Activated CD4-positive, alpha-beta T cell treated with anti-CD3 and anti-CD28 coated beads, Interleukin-2, amount 10 ng/mL, durations not matched to agents 24 days and 14 days (primary cell): ENCODE measurements at regions of chrX and their contacts with region 1.

Region 1: DNA sequence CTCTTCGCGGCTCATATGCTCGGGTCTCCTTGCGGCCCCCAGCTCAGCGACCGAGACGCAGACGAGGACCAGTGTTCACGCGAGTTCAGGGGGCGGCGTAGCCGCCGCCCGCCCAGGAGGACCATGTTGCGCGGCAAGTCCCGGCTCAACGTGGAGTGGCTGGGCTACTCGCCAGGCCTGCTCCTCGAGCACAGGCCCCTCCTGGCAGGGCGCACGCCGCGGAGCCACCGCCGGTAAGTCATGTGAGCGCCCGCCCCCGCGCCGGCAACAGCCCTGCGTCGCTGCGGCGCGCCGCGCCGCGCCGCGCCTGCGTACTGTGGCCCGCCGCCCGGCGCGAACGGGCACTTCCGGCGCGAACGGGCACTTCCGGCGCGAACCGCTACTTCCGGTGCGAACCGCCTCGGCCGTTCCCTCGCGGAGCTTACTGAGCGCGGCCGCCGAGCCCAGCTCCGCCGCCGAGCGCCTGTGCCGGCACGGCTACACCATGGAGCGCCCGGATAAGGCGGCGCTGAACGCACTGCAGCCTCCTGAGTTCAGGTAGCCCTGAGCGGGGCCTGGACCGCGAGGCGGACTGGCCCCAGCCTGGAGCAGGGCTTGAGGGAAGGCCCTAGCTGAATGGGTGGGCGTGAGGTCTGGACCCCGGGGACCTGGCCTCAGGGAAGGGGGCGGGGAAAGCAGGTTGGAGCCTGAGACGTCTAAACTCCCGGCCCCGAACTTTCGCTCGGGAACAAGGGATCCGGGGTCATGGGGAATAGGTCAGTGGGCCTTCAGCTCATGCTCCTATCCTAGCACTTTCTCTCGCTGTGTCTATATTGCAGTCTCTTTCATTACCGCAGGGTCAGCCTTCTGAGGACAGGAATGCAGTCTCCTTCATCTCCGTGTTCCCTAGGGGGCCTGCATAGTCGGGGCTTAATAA is at the start of gene VMA21:
- DNase-seq: peak; percentile 94
- H3K4me3 Mint-ChIP-seq: peak within 1 kb of the TSS; percentile 93
- H3K27ac Mint-ChIP-seq: peak within 1 kb of the TSS; percentile 94
- H3K4me1 Mint-ChIP-seq: peaks cover 40% of the 10 kb centered on the region
- H3K27me3 Mint-ChIP-seq: no peaks in the 10 kb centered on the region
- total RNA-seq, gene VMA21: 47.4 and 51.7 TPM in 2 replicates

Region 2: GRCh38 chrX:149504915-149505651 is 1892.0 kb before region 1 on chrX and contains the start of gene IDS:
- intact Hi-C with region 1: loop called (anchors 10 kb)
- DNase-seq: peak; percentile 97
- H3K4me3 Mint-ChIP-seq: peak within 1 kb of the TSS; percentile 88
- H3K27ac Mint-ChIP-seq: peak within 1 kb of the TSS; percentile 96
- H3K4me1 Mint-ChIP-seq: peaks cover 31% of the 10 kb centered on the region
- H3K27me3 Mint-ChIP-seq: no peaks in the 10 kb centered on the region
- total RNA-seq, gene IDS: 43.9 and 44.9 TPM in 2 replicates

Region 3: GRCh38 chrX:150568320-150569154 is 828.5 kb before region 1 on chrX and contains the start of gene MTM1:
- intact Hi-C with region 1: loop called (anchors 10 kb)
- DNase-seq: peak; percentile 97
- H3K4me3 Mint-ChIP-seq: peak within 1 kb of the TSS; percentile 86
- H3K27ac Mint-ChIP-seq: peak within 1 kb of the TSS; percentile 81
- H3K4me1 Mint-ChIP-seq: peaks cover 33% of the 10 kb centered on the region
- H3K27me3 Mint-ChIP-seq: no peaks in the 10 kb centered on the region
- total RNA-seq, gene MTM1: 18.2 and 23.7 TPM in 2 replicates

Region 4: DNA sequence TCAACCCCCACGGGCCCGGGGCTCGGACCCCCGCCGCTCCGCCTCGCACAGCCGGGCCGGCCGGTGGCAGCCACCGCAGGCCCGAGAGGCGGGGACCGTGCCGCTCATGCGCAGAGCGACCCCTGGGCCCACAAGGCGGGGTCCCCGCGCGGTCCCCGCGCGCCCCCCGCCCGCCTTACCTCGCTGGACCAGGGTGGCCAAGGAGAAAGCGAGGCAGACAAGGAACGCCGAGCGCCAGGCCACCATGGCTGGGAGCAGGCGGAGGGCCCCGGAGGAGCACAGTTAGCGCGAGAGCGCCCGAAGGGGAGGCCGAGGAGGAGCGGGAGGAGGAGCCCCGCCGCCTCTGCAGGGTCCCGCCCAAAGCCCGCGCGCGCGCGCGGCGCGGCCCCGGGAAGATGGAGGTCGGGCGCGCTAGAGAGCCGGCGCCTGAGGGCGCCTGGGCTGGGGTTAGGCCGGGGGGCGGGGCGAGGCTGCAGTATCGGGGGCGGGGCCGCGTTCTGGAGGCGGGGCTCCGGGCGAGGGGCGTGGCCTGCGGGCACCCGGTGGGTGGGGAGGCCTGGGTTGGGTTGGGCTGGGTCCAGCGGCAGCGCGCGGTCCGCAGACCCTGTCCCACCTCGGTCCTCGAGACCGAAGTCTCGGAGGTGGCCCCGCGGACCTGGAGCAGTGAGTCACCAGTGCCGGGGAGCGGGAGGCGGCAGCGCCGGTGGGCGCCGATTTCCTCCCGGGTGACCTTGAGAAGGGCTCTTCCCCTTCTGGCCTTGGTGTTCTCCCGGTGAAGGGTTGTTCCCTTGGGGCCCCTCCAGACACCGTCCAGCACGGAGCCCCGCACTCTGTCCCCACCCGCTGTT is 498.5 kb before region 1 on chrX and contains the start of gene CD99L2:
- intact Hi-C with region 1: loop called (anchors 10 kb)
- DNase-seq: peak; percentile 96
- H3K4me3 Mint-ChIP-seq: peak within 1 kb of the TSS; percentile 91
- H3K27ac Mint-ChIP-seq: peak within 1 kb of the TSS; percentile 69
- H3K4me1 Mint-ChIP-seq: peaks cover 5% of the 10 kb centered on the region
- H3K27me3 Mint-ChIP-seq: peaks cover 13% of the 10 kb centered on the region
- total RNA-seq, gene CD99L2: 8.1 and 10.9 TPM in 2 replicates

Region 5: DNA sequence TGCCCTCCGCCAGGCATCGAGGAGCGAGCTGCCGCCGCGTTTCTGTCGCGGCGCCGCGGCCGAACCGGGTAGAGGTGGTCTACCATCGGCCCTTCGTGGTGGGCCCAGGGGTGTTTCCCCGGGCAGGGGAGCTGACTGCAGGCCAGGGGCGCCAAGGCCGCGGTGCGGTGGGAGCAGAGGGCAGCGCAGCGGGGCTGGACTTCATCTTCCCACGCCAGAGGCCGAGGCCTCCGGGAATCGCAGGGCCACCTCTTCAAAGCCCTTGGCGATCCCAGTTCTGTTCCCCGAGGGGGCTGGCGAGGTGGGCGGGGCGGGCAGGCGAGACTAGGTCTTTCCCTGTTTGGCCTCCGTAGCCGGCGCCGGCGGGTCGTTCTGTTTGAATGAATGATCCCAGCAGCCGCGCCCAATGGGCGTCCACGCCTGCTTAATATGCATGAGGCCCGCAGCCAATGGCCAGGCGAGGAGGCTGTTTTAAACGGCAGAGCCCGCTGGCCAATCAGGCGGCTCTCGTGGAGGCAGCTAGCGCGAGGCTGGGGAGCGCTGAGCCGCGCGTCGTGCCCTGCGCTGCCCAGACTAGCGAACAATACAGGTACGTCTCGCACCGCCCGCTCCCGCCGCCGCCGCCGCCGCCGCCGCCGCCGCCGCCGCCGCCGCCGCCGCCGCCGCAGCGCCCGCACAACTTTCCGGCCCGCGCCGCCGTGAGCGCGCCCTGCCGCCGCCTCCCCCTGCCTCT is 414.1 kb before region 1 on chrX and contains the start of gene HMGB3:
- intact Hi-C with region 1: loop called (anchors 1 kb)
- DNase-seq: peak; percentile 94
- H3K4me3 Mint-ChIP-seq: peak within 1 kb of the TSS; percentile 66
- H3K27ac Mint-ChIP-seq: peak within 1 kb of the TSS; percentile 25
- H3K4me1 Mint-ChIP-seq: peaks cover 4% of the 10 kb centered on the region
- H3K27me3 Mint-ChIP-seq: peaks cover 4% of the 10 kb centered on the region
- total RNA-seq, gene HMGB3: 32.6 and 32.8 TPM in 2 replicates

Region 6: GRCh38 chrX:153333768-153334645 is 1936.9 kb after region 1 on chrX and contains the start of gene ZNF275:
- intact Hi-C with region 1: loop called (anchors 10 kb)
- DNase-seq: peak; percentile 95
- H3K4me3 Mint-ChIP-seq: peak within 1 kb of the TSS; percentile 83
- H3K27ac Mint-ChIP-seq: peak within 1 kb of the TSS; percentile 92
- H3K4me1 Mint-ChIP-seq: peaks cover 39% of the 10 kb centered on the region
- H3K27me3 Mint-ChIP-seq: peaks cover 3% of the 10 kb centered on the region
- total RNA-seq, gene ZNF275: 20.1 and 22.1 TPM in 2 replicates